ENCODE measurements at regions of chr11 and their contacts with region 1.

Region 1: DNA sequence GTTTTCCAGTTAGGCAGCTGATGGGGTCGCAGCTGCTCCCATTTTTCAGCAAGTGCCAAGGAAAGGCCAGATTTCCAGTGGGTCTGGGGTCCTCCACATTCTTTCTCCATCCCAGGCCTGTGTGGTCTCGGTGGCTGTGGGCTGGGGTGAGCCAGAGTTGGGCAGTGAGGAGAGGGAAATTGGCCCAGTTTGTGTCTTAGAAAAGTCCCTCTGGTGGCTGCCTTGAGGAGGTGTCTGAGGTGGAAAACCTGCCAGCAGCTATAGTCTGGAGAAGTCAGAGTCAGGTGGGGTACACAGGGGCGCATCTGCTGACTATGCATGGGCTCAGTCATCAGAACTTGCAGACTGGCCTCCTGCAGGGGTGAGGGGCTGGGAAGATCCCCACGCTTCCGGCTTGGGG is 30.5 kb downstream of the MRGPRD start:
- DNase-seq: no peak
- ATAC-seq: no peak
- H3K4me3 ChIP-seq: no peak overlapping the region
- H3K27ac ChIP-seq: no peak overlapping the region
- H3K4me1 ChIP-seq: no peaks in the 10 kb centered on the region
- H3K27me3 ChIP-seq: no peaks in the 10 kb centered on the region

Region 2: GRCh38 chr11:68896575-68897215 is 53.6 kb before region 1 on chr11:
- intact Hi-C with region 1: loop called in 1 of 2 experiments (anchors 5 kb)
- DNase-seq: no peak
- ATAC-seq: no peak
- H3K4me3 ChIP-seq: no peak overlapping the region
- H3K27ac ChIP-seq: no peak overlapping the region
- H3K4me1 ChIP-seq: no peaks in the 10 kb centered on the region
- H3K27me3 ChIP-seq: no peaks in the 10 kb centered on the region

Region 3: GRCh38 chr11:69000831-69001242 is 50.6 kb after region 1 on chr11:
- intact Hi-C with region 1: loop called (anchors 2 to 5 kb)
- DNase-seq: peak; percentile 81 to 91
- ATAC-seq: peak; percentile 77
- H3K4me3 ChIP-seq: no peak overlapping the region
- H3K27ac ChIP-seq: peak overlapping the region; percentile 51 to 88
- H3K4me1 ChIP-seq: peaks cover 0 to 5% of the 10 kb centered on the region in 2 donors
- H3K27me3 ChIP-seq: no peaks in the 10 kb centered on the region